Lower lobe of right lung (tissue), 2 donors: ENCODE measurements at regions of chr18 and their contacts with region 1.

Region 1: DNA sequence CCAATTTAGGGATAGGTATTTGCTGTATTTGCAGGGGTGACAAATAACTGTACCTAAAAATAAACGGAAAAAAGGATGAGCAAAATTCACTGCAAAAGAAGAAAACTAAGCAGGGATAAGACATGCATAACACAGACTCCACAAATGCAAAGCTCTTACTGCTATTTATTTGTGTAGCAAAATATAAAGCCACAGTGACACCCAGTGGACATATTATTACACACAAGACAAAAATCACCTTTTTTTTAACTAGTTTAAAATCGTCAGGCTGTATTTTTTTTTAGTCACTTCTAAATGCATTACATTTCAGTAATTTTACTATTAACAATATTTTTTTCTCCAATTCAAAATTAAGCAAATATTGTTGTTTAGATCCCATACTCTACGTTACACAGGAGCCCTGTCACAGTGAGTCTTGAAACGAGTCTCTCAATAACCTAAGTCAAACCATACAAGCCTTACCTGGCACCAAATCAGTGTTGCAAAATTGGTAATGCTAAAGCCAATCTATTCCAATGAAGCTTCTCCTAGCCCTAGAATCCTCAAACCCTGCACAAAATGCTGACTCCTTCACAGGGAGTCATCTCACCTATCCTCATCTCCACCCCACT is 23.7 kb downstream of the METTL4 start:
- DNase-seq: no peak
- ATAC-seq: peak in 1 of 2 donors; percentile 42
- H3K4me3 ChIP-seq: no peak overlapping the region
- H3K27ac ChIP-seq: no peak overlapping the region
- H3K4me1 ChIP-seq: no peaks in the 10 kb centered on the region
- H3K27me3 ChIP-seq: no peaks in the 10 kb centered on the region
- CTCF ChIP-seq: peak; percentile 50

Region 2: GRCh38 chr18:2104620-2105462 is 442.7 kb before region 1 on chr18:
- intact Hi-C with region 1: loop called (anchors 10 kb)
- DNase-seq: peak; percentile 56
- ATAC-seq: peak; percentile 74 to 77
- H3K4me3 ChIP-seq: no peak overlapping the region
- H3K27ac ChIP-seq: no peak overlapping the region
- H3K4me1 ChIP-seq: no peaks in the 10 kb centered on the region
- H3K27me3 ChIP-seq: no peaks in the 10 kb centered on the region
- CTCF ChIP-seq: peak; percentile 68